ENCODE measurements at regions of chr7 and their contacts with region 1.

Region 1: DNA sequence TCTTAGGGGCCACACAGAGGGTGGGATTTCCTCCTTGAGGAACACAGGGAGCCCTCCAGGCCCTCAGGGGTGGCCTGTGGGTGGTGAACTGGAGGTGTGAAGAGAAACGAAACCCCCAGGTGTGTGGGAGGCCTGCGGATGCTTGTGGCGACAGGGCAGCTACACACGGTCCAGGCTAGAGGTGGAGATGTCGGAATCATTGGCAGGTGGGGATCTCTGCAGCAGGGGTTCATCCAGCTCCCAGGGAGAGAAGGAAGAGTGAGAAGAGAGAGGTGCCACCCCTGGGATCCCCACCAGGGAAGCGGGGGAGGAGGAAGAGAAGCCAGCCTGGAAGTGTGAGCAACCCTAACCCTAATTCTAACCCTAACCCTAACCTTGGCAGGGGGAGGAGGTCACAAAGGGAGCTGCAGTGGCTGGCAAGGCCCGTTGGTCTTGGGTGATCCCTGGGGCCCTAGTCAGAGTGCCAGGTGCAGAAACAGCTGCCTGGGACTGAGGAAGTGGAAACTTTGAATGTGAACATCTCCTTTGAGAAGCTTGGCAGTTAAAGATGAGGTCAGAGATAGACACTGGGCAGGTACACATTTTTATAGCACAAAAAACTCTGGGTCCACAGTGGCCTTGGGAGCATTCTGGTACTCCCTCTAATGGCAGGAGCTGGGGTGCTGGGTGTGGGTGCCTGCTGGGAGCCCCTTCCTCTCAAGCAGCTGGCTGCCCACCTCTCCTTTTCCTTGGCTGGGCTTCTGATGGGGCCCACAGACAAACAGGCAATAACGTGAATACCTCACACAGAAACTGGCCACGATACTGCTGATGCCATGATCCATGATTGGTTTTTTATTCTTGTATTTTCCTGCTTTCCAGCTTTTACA is 6.8 kb upstream of the AEBP1 start:
- DNase-seq: no peak
- ATAC-seq: no peak
- H3K4me3 Mint-ChIP-seq: no peak overlapping the region
- H3K27ac Mint-ChIP-seq: no peak overlapping the region
- H3K4me1 Mint-ChIP-seq: 0 out of 2 replicates have a peak, but pooled peaks cover 3% of the 10 kb centered on the region
- H3K27me3 Mint-ChIP-seq: peaks cover 12% of the 10 kb centered on the region
- CTCF ChIP-seq: no peak

Region 2: GRCh38 chr7:44431091-44431608 is 333.9 kb after region 1 on chr7:
- CTCF ChIA-PET with region 1: interaction called, 12 read pairs
- POLR2A ChIA-PET with region 1: no interaction called
- DNase-seq: peak; percentile 47
- ATAC-seq: peak; percentile 95
- H3K4me3 Mint-ChIP-seq: no peak overlapping the region
- H3K27ac Mint-ChIP-seq: no peak overlapping the region
- H3K4me1 Mint-ChIP-seq: peaks cover 11% of the 10 kb centered on the region
- H3K27me3 Mint-ChIP-seq: no peaks in the 10 kb centered on the region
- CTCF ChIP-seq: no peak

Measured in WTC11 (cell line).